Activated CD4-positive, alpha-beta T cell treated with anti-CD3 and anti-CD28 coated beads, Interleukin-2, amount 10 ng/mL, durations not matched to agents 24 days and 14 days (primary cell): ENCODE measurements at regions of chr3 and their contacts with region 1.

Region 1: DNA sequence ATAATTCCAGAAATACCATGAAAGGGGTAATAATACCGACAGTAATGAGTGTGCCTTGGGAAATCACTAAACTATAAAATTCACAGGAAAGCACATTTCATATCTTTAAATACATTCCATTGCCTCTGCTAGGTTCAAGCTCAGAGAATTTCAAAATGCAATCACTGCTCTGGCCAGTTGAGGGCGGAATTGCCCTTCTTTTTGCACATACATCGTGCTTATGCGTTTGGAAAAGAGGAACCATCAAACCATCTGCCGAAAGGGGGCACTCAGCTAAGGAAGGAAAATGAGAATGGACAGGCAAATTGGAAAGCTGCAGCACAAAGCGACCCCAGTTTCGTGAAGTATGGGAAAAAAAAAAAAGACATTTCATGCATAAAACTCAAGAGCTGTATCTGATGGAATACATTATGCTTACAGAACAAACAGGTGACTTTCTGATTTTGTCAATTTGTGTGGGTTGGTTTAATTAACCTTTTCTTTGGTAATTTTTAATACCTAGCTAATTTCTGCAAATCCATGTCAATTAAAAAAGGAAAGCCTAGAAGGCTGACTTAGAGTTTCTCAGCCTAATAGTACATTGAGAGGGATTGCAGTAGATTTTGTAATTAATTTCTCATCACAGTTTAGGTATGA is 61.4 kb downstream of the TUSC7 start:
- DNase-seq: peak; percentile 82
- H3K4me3 Mint-ChIP-seq: no peak overlapping the region
- H3K27ac Mint-ChIP-seq: no peak overlapping the region
- H3K4me1 Mint-ChIP-seq: no peaks in the 10 kb centered on the region
- H3K27me3 Mint-ChIP-seq: no peaks in the 10 kb centered on the region

Region 2: DNA sequence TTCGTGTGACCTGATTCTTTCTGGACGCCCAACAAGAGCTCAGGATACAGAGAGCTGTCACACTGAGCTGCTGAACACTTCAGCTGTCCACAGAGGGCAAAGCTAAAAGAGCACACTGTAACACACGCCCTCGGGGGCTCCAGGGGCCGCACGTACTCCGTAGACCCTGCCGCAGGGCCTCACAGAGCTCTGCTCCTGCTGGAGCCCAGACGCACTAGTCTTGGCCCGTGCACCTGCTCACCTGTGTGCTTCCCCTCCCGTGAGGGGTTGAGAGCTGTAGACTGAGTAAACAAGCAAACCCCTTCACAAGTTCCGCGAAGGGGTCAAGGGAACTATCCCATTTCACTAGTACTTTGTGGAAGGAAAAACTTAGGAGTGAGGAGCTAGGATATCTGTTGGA is 92.1 kb before region 1 on chr3:
- intact Hi-C with region 1: no loop called
- DNase-seq: no peak
- H3K4me3 Mint-ChIP-seq: no peak overlapping the region
- H3K27ac Mint-ChIP-seq: no peak overlapping the region
- H3K4me1 Mint-ChIP-seq: no peaks in the 10 kb centered on the region
- H3K27me3 Mint-ChIP-seq: no peaks in the 10 kb centered on the region

Region 3: DNA sequence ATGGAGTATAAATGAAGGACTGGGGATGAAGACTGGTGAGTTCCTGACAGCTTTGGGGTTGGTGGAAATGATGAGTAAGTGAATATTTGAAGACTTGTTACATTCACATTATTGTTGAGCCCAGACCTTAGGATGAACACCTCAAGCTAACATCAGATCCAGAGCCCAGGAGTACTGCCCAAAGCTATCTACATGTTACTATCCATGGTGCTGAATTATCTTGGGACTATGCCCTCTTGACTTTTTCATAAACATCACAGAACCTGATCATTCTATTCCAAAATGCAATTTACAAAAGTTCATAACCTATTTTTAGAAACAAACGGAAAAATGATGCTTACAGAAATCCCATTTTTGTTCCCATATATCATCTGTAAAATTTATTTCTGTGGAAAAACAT is 551.9 kb after region 1 on chr3:
- intact Hi-C with region 1: no loop called
- DNase-seq: no peak
- H3K4me3 Mint-ChIP-seq: no peak overlapping the region
- H3K27ac Mint-ChIP-seq: no peak overlapping the region
- H3K4me1 Mint-ChIP-seq: no peaks in the 10 kb centered on the region
- H3K27me3 Mint-ChIP-seq: no peaks in the 10 kb centered on the region

Region 4: DNA sequence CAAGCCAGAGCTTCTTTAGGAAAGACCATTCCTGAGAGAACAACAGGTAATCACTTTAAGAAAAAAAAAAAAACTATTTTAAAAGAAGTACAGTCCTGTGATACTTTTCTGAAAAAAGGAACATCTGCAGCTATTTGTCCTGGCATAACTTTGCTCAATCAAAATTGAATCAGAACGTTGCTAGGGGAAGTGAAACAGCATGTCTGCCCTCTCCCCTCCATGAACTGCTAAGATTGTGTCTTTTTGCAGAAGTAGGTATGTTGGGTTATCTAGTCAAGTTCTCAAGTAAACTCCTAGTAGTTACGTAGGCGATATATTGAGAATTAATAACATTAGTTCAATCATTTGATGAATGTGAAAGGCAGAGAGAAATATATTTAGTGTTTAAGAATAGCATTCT is 951.9 kb after region 1 on chr3:
- intact Hi-C with region 1: loop called (anchors 10 kb)
- DNase-seq: no peak
- H3K4me3 Mint-ChIP-seq: no peak overlapping the region
- H3K27ac Mint-ChIP-seq: no peak overlapping the region
- H3K4me1 Mint-ChIP-seq: no peaks in the 10 kb centered on the region
- H3K27me3 Mint-ChIP-seq: no peaks in the 10 kb centered on the region